AG04450 (cell line): ENCODE measurements at regions of chr6 and their contacts with region 1.

Region 1: DNA sequence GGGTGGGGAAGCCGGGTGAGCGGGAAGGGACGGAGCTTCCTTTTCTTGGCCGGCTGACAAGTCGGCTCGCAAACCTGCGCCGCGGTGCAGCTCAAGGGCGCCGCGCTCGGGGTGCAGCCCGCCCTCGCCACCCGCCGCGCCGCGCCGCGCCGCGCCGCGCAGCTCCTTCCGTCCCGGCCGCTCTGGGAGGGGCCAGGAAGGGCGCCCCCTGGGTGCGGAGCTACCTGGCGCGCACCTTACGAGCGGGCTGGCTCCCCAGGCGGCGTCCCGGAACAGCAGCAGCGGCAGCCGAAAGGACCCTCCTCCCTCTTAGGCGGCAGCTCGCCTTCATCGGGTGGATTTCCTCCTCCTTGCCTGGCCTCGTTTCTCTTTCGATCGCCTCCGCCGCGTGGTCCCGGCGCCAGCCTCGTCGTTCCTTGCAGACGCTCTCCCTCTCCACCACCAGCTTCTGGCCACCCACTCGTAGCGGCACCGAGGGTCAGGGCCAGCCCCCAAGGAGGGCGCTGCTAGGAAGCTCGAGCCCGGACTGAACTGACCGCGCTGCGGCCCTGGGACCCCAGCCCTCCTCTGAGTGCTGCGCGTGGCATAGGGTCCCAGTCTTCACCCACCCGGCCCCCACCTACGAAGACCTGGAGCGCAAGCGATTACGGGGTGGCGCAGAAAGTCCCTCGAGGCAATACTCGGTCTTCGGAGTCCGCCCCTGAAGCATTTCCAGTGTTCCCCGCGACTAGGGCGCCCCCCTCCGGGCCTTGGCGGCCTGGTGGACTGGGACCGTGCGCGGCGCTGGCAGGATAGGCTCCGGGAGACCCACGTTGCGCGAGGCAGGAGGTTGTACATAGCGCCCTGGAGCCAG is at the start of gene MAP3K5:
- DNase-seq: peak; percentile 69
- H3K4me3 ChIP-seq: peak within 1 kb of the TSS; percentile 96
- H3K27ac ChIP-seq: peak within 1 kb of the TSS; percentile 92
- H3K27me3 ChIP-seq: no peaks in the 10 kb centered on the region
- CTCF ChIP-seq: peak; percentile 88
- polyA plus RNA-seq, gene MAP3K5: 16.1 and 17.0 TPM in 2 replicates

Region 2: GRCh38 chr6:136582711-136583471 is 209.7 kb before region 1 on chr6:
- CTCF ChIA-PET with region 1: interaction called, 25 read pairs
- POLR2A ChIA-PET with region 1: interaction called, 4 read pairs
- DNase-seq: peak; percentile 66
- H3K4me3 ChIP-seq: no peak overlapping the region
- H3K27ac ChIP-seq: peak overlapping the region; percentile 83
- H3K27me3 ChIP-seq: no peaks in the 10 kb centered on the region
- CTCF ChIP-seq: peak; percentile 64

Region 3: DNA sequence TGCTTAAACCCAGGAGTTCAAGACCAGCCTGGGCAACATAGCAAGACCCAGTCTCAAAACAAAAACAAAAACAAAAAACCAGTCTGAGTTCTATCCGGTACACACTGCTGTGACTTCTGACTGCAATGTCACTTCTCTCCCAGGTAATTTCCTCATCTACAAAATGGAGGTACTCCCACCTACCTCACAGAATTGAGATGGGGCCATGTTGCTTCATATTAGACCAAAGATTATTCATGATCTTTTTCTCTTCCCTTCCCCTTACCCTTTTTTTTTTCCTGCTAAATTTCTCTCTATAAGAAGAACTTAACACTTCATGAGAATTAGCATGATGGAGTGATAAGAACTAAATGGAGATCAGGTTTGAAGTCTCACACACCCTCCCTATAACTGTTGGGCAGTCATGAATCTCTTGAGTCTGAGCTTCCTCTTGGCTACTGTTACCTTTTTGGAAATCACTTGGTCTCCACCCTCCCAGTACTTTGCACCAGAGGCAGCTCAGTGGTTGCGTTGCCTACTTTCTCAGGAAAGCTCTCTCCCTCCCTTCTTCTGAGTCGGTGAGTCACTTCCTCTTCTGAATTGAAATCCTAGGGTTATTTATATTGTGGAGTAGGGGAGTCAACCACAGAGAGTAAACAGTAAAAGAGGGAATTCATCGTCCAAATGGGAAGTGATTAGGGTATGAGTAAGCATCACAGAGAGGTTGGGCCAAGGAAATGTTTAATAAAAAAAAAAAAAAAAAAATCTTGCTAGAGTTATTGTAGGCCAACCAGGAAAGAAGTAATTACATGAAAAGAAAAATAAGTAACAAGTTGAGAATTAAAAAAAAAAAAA is 182.5 kb before region 1 on chr6:
- CTCF ChIA-PET with region 1: interaction called, 11 read pairs
- POLR2A ChIA-PET with region 1: interaction called, 11 read pairs
- DNase-seq: peak; percentile 98
- H3K4me3 ChIP-seq: no peak overlapping the region
- H3K27ac ChIP-seq: peak overlapping the region; percentile 81
- H3K27me3 ChIP-seq: no peaks in the 10 kb centered on the region
- CTCF ChIP-seq: no peak

Region 4: DNA sequence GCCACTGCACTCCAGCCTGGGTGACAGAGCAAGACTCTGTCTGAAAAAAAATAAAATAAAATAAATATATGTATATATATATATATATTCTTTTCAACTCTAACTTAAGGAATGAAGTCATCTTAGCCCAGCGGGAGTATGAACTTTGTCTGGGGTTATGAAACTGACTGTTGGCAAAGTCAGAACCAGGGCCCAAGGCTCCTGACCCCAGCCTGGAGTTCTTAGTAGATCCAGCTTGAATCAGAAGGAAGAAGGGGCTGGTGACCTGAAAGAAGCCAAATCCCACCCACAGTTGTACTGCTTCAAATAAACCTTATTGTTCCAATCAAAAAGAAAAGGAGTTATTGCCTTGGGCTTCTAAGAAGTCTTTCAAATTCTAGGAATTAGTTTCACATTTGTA is 159.3 kb before region 1 on chr6:
- CTCF ChIA-PET with region 1: interaction called, 25 read pairs
- POLR2A ChIA-PET with region 1: no interaction called
- DNase-seq: no peak
- H3K4me3 ChIP-seq: no peak overlapping the region
- H3K27ac ChIP-seq: no peak overlapping the region
- H3K27me3 ChIP-seq: no peaks in the 10 kb centered on the region
- CTCF ChIP-seq: no peak

Region 5: GRCh38 chr6:136651982-136652381 is 140.7 kb before region 1 on chr6:
- CTCF ChIA-PET with region 1: interaction called, 221 read pairs
- POLR2A ChIA-PET with region 1: interaction called, 7 read pairs
- DNase-seq: no peak
- H3K4me3 ChIP-seq: no peak overlapping the region
- H3K27ac ChIP-seq: no peak overlapping the region
- H3K27me3 ChIP-seq: no peaks in the 10 kb centered on the region
- CTCF ChIP-seq: no peak

Region 6: GRCh38 chr6:136772685-136773472 is 19.8 kb before region 1 on chr6:
- CTCF ChIA-PET with region 1: interaction called, 10 read pairs
- POLR2A ChIA-PET with region 1: no interaction called
- DNase-seq: no peak
- H3K4me3 ChIP-seq: no peak overlapping the region
- H3K27ac ChIP-seq: no peak overlapping the region
- H3K27me3 ChIP-seq: no peaks in the 10 kb centered on the region
- CTCF ChIP-seq: no peak

Region 7: DNA sequence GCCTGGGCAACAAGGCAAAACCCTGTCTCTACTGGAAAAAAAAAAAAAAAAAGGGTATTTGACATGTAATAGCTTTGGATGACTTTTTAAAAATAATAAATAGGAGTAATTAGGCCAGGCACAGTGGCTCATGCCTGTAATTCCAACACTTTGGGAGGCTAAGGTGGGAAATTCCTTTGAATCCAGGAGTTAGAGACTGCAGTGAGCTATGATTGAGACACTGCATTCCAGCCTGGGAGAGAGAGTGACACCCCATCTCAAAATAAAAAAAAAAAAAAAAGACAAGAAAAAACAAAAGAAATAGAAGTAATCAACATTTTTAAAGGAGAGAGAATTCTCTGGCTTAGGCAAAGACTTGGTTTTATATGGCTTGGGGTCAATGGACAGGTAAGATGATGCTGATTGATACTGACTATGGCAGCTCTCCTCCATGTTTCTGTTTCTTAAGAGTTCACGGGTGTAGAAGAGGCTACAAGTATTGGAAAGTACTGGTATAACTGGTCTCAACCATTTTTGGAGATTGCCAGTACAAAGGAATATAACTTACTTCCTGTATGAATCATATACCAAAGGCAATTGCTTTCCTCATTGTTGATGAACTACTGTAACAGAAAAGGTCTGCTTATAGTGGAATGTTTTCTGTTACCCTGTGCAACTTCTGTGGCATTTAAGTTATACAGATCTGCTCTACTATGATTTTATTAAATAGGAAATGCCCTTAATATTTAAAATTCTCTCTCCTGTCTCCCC is 10.4 kb before region 1 on chr6:
- CTCF ChIA-PET with region 1: interaction called, 15 read pairs
- POLR2A ChIA-PET with region 1: no interaction called
- DNase-seq: peak; percentile 21
- H3K4me3 ChIP-seq: no peak overlapping the region
- H3K27ac ChIP-seq: peak overlapping the region; percentile 58
- H3K27me3 ChIP-seq: no peaks in the 10 kb centered on the region
- CTCF ChIP-seq: no peak